Activated CD8-positive, alpha-beta T cell treated with anti-CD3 and anti-CD28 coated beads, Interleukin-2, amount 10 ng/mL, durations not matched to agents 7 days and 5 days (primary cell): ENCODE measurements at regions of chr5 and their contacts with region 1.

Region 1: DNA sequence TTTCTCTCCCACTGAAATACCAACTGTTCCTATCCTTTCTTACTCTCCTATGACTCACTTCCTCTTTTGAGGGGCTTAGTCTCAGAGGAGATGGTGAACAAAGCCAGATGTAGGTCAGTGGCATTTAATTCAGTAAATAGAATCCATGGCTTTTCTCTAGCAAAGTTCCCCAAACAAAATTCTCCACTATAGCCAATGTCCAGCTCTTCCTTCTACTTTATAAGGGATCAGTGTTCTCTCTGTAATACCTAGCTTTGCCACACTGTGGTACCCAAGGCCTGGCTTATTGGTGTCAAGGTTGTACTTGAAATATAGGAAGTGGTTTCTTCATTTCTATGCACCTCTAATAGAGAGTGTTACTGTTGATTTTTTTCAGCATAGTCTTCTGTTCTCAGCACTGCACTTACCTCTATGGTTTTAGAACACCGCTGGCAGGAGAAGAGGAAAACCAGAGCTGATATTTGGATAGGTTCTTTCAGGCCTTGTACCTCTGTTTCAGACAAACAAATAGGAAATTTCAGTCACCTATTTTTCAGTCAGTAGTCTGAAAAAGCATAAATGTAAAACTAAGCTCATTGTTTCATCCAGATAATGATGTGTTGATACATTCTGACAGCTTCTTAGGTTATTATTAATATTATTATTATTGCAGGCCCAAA is 40.6 kb upstream of the ITGA2 start:
- DNase-seq: peak; percentile 85
- ATAC-seq: peak; percentile 92
- H3K4me3 Mint-ChIP-seq: no peak overlapping the region
- H3K27ac Mint-ChIP-seq: peak overlapping the region; percentile 21
- H3K4me1 Mint-ChIP-seq: peaks cover 38% of the 10 kb centered on the region
- H3K27me3 Mint-ChIP-seq: no peaks in the 10 kb centered on the region

Region 2: DNA sequence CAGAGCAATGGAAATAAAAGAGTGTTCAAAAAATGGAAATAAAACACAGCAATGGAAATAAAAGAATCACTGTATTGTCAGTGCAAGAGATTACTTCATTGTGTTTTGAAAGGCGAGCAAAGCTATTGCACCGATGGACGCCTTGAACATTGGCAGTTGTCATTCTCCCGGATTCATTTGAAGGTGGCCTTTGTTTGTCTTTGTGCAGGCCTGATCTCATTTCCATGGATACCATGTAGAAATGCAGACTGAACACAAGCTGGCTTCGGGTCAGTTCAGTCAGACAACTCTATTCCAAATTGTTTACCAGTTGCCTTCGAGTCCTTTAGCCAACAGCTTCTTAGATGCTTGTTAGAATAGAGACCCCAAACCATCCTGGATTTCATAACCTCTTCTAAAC is 48.9 kb after region 1 on chr5:
- CTCF ChIA-PET with region 1: interaction called, 81 read pairs
- POLR2A ChIA-PET with region 1: no interaction called
- DNase-seq: no peak
- ATAC-seq: no peak
- H3K4me3 Mint-ChIP-seq: no peak overlapping the region
- H3K27ac Mint-ChIP-seq: no peak overlapping the region
- H3K4me1 Mint-ChIP-seq: peaks cover 5% of the 10 kb centered on the region
- H3K27me3 Mint-ChIP-seq: peaks cover 7% of the 10 kb centered on the region

Region 3: GRCh38 chr5:53041071-53041692 is 92.6 kb after region 1 on chr5:
- CTCF ChIA-PET with region 1: interaction called, 45 read pairs
- POLR2A ChIA-PET with region 1: no interaction called
- DNase-seq: peak; percentile 59
- ATAC-seq: peak; percentile 95
- H3K4me3 Mint-ChIP-seq: peak overlapping the region; percentile 73
- H3K27ac Mint-ChIP-seq: peak overlapping the region; percentile 88
- H3K4me1 Mint-ChIP-seq: peaks cover 79% of the 10 kb centered on the region
- H3K27me3 Mint-ChIP-seq: peaks cover 5% of the 10 kb centered on the region

Region 4: GRCh38 chr5:53069626-53070025 is 121.1 kb after region 1 on chr5:
- CTCF ChIA-PET with region 1: interaction called, 10 read pairs
- POLR2A ChIA-PET with region 1: no interaction called
- DNase-seq: peak; percentile 82
- ATAC-seq: peak; percentile 94
- H3K4me3 Mint-ChIP-seq: peak overlapping the region; percentile 44
- H3K27ac Mint-ChIP-seq: peak overlapping the region; percentile 80
- H3K4me1 Mint-ChIP-seq: peaks cover 30% of the 10 kb centered on the region
- H3K27me3 Mint-ChIP-seq: peaks cover 5% of the 10 kb centered on the region

Region 5: DNA sequence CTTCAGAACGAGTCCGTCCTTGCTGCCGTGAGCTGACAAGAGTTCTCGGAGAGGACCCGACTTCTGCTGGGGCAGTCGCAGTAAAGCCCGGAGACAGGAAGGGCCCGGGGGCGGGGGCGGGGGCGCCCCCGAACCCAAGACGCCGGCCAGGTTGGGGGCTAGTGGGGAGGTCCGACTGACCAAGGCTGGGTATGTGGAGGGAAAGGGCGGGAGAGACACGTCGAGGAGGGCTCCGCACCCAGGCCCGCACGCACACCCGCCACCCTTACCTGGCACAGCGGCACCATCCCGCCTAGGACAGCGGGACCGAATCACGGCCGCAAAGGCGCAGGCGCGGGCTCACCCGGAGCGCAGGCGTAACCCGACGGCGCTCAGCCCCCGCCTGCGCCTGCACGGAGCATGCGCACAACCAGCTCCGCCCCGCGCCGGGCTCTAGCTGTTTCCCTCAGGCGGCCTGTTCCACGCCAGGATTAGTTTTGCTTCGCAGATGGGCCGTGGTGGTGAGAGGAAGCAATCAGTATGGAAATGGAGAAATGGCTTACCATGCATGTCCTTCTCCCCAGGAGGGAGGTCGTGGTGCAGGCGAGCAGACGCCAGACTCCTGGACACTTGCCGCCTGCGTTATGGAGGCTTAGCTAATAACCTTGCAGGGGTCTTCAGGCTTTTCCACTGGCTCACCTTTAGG is 161.0 kb after region 1 on chr5 and contains the start of gene MOCS2:
- CTCF ChIA-PET with region 1: interaction called, 282 read pairs
- POLR2A ChIA-PET with region 1: interaction called, 3 read pairs
- DNase-seq: peak; percentile 92
- ATAC-seq: peak; percentile 99
- H3K4me3 Mint-ChIP-seq: peak within 1 kb of the TSS; percentile 93
- H3K27ac Mint-ChIP-seq: peak within 1 kb of the TSS; percentile 87
- H3K4me1 Mint-ChIP-seq: peaks cover 42% of the 10 kb centered on the region
- H3K27me3 Mint-ChIP-seq: no peaks in the 10 kb centered on the region
- total RNA-seq, gene MOCS2: 30.7 TPM